ENCODE measurements at regions of chr5 and their contacts with region 1.

Region 1: GRCh38 chr5:95781101-95781583 is 41.4 kb downstream of the GLRX start:
- DNase-seq: peak; percentile 85
- H3K4me3 Mint-ChIP-seq: no peak overlapping the region
- H3K27ac Mint-ChIP-seq: peak overlapping the region; percentile 64
- H3K4me1 Mint-ChIP-seq: no peaks in the 10 kb centered on the region
- H3K27me3 Mint-ChIP-seq: no peaks in the 10 kb centered on the region
- CTCF ChIP-seq: peak; percentile 89

Region 2: GRCh38 chr5:95646554-95647431 is 134.3 kb before region 1 on chr5 and contains the start of gene RFESD:
- CTCF ChIA-PET with region 1: interaction called, 59 read pairs
- POLR2A ChIA-PET with region 1: interaction called, 7 read pairs
- intact Hi-C with region 1: loop called (anchors 1 kb)
- DNase-seq: peak; percentile 96
- H3K4me3 Mint-ChIP-seq: peak within 1 kb of the TSS; percentile 74
- H3K27ac Mint-ChIP-seq: peak within 1 kb of the TSS; percentile 89
- H3K4me1 Mint-ChIP-seq: peaks cover 15% of the 10 kb centered on the region
- H3K27me3 Mint-ChIP-seq: no peaks in the 10 kb centered on the region
- CTCF ChIP-seq: no peak
- total RNA-seq, gene RFESD: 4.2 and 5.9 TPM in 2 replicates

Region 3: DNA sequence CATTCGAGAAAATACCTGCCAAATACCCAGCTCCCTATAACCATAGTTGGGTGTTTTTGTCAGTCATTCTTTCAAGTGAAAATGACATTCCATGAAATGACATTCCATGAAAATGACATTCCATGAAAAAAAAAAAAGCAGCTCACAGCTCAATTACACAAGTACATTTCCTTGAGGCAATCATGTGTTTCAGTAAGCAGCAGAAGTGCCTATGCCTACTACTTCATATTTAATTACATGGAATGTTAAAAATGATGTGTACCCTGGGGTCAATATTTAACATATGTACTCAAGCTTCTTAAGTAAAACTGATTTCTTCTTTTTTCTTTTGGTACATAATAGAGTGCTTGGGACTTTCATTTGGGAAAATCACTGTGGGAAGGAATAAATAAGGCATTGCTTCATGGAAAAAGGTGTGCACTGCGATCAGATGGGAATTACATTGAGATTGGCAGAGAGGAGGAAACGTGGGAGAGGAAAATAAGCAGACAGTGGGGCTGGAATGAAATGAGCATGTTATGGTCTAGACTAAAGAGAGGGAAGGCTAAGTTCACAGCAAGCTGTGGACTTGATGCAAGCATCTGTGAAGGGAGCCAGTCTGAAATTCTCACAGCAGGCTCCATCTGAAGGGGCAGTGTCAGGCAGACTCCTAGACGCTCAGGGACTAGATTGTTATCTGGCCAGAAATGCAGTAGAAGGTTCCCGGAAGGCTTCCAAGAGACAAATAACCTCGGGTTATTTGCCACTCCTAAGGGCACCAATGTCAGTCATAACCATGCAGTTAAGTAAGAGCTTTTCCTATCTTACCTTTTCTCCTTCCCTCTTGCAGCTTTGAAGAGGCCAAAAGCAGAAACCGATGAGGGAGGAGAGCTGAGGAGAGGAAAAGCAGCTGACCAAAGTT is 83.1 kb before region 1 on chr5:
- CTCF ChIA-PET with region 1: interaction called, 13 read pairs
- POLR2A ChIA-PET with region 1: no interaction called
- intact Hi-C with region 1: no loop called
- DNase-seq: no peak
- H3K4me3 Mint-ChIP-seq: no peak overlapping the region
- H3K27ac Mint-ChIP-seq: no peak overlapping the region
- H3K4me1 Mint-ChIP-seq: peaks cover 10% of the 10 kb centered on the region
- H3K27me3 Mint-ChIP-seq: no peaks in the 10 kb centered on the region
- CTCF ChIP-seq: no peak

Region 4: GRCh38 chr5:95793610-95794009 is 12.5 kb after region 1 on chr5:
- CTCF ChIA-PET with region 1: interaction called, 49 read pairs
- POLR2A ChIA-PET with region 1: no interaction called
- intact Hi-C with region 1: no loop called
- DNase-seq: no peak
- H3K4me3 Mint-ChIP-seq: no peak overlapping the region
- H3K27ac Mint-ChIP-seq: no peak overlapping the region
- H3K4me1 Mint-ChIP-seq: no peaks in the 10 kb centered on the region
- H3K27me3 Mint-ChIP-seq: no peaks in the 10 kb centered on the region
- CTCF ChIP-seq: no peak

Region 5: GRCh38 chr5:95808686-95809413 is 27.7 kb after region 1 on chr5:
- CTCF ChIA-PET with region 1: interaction called, 19 read pairs
- POLR2A ChIA-PET with region 1: no interaction called
- intact Hi-C with region 1: no loop called
- DNase-seq: no peak
- H3K4me3 Mint-ChIP-seq: no peak overlapping the region
- H3K27ac Mint-ChIP-seq: no peak overlapping the region
- H3K4me1 Mint-ChIP-seq: peaks cover 6% of the 10 kb centered on the region
- H3K27me3 Mint-ChIP-seq: no peaks in the 10 kb centered on the region
- CTCF ChIP-seq: no peak

Region 6: DNA sequence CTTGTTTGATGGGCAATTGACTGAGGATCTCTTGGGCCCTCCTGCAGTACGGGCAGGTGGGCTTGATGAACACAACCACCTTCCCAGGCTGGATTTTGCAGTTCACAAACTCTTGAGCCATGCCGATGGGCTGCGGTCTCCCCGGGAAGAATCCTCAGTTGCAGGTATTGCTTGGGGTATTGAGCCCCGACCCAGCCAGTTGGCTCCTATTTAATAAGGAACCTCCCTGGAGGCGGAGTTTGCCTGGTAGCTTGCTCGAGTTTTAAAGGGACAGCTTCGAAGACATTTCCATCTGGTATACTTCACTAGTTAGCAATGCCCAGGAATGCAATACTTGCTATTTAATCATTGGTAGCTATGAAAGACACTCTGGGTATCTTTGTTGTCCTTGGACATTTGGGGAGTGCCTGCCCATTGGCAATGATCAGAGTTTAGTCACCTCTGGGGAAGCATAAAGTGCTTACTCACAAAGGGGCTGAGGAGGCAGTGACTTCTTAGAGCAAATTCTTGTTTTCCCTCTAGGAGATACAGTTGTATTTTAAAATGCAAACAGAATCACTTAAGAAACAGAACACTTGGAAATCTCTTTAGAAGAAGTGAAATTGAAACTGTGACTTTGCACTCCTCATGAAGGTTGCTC is 41.5 kb after region 1 on chr5 and contains the start of gene GLRX:
- CTCF ChIA-PET with region 1: interaction called, 48 read pairs
- POLR2A ChIA-PET with region 1: interaction called, 28 read pairs
- intact Hi-C with region 1: loop called (anchors 1 kb)
- DNase-seq: peak; percentile 93
- H3K4me3 Mint-ChIP-seq: peak within 1 kb of the TSS; percentile 95
- H3K27ac Mint-ChIP-seq: peak within 1 kb of the TSS; percentile 92
- H3K4me1 Mint-ChIP-seq: peaks cover 42% of the 10 kb centered on the region
- H3K27me3 Mint-ChIP-seq: no peaks in the 10 kb centered on the region
- CTCF ChIP-seq: no peak
- total RNA-seq, gene GLRX: 41.4 and 59.2 TPM in 2 replicates